ENCODE measurements at regions of chr2 and their contacts with region 1.

Region 1: GRCh38 chr2:231917280-231918066 is 8.7 kb downstream of the NPPC start:
- DNase-seq: no peak
- H3K4me3 ChIP-seq: no peak overlapping the region
- CTCF ChIP-seq: no peak

Region 2: GRCh38 chr2:232438951-232439757 is 521.7 kb after region 1 on chr2:
- in situ Hi-C with region 1: loop called (anchors 10 kb)
- DNase-seq: no peak
- H3K4me3 ChIP-seq: no peak overlapping the region
- CTCF ChIP-seq: peak; percentile 39

Measured in astrocyte of the cerebellum (primary cell).